Activated CD8-positive, alpha-beta memory T cell treated with anti-CD3 and anti-CD28 coated beads, Interleukin-2, amount 10 ng/mL, durations not matched to agents 7 days and 5 days (primary cell): ENCODE measurements at regions of chr19 and their contacts with region 1.

Region 1: DNA sequence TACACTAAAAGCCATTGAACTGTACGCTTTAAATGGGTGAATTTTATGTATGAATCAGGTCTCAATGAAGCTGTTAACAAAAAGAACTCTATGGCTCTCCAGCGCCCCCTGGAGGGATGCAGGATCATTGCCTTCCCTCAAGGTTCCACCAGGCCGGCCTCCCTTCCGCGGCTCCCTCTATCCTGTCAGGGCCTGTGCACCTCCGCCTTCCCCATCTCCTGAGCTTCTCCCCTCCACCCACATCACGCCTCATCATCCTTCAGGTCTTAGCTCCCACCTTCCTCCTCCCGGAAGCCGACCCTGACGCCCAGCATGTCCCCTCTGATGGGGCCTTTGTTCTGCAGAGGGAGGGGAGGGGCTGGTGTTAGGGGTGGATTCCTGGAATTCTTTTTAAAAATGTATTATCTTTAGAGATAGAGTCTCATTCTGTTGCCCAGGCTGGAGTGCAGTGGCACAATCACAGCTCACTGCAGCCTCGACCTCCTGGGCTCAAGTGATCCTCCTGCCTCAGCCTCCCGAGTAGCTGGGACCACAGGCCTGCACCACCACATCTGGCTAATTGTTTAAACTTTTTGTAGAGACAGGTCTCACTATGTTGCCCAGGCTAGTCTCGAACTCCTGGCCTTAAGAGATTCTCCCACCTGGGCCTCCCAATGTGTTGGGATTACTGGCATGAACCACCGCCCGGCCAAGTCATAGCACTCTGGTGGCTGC is 27.7 kb downstream of the MEIS3 start:
- DNase-seq: peak; percentile 87
- ATAC-seq: peak; percentile 87
- H3K4me3 Mint-ChIP-seq: no peak overlapping the region
- H3K27ac Mint-ChIP-seq: no peak overlapping the region
- H3K4me1 Mint-ChIP-seq: peaks cover 4% of the 10 kb centered on the region
- H3K27me3 Mint-ChIP-seq: peaks cover 4% of the 10 kb centered on the region

Region 2: DNA sequence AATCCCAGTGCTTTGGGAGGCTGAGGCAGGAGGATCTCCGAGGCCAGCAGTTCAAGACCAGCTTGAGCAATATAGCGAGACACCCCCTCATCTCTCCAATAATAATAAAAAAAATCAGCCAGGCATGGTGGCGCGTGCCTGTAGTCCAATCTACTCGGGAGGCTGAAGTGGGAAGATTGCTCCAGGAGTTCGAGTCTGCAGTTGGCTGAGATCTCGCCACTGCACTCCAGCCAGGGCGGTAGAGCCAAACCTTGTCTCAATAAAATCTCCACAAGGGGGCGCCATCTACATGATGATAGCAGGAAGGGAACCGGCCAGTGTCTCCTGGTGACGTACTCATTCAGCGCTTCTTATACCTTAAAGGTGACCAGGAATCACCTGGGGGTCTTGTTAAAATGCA is 95.6 kb before region 1 on chr19:
- CTCF ChIA-PET with region 1: interaction called, 88 read pairs
- DNase-seq: peak; percentile 86
- ATAC-seq: peak; percentile 96
- H3K4me3 Mint-ChIP-seq: no peak overlapping the region
- H3K27ac Mint-ChIP-seq: no peak overlapping the region
- H3K4me1 Mint-ChIP-seq: peaks cover 14% of the 10 kb centered on the region
- H3K27me3 Mint-ChIP-seq: no peaks in the 10 kb centered on the region

Region 3: DNA sequence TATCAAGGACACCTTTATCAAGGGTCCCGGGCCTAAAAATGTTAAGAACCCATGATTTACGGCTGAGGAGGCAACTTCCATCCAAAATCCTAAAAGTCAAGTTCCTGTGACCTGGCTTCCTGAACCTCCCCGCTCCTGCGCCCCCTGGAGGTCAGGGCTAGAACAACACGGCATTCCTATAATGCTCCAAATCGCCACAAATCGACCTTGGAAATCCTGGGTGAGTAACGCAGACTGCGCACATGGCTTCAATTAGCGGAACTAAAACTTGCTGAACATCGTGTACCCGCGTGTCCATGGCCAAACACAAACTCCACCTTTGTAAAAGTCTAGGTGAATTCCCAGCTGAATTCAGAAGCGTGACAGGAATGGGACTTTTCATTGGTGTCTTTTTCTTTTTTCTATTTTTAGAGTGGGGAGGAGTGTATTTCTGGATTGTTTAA is 86.3 kb before region 1 on chr19:
- CTCF ChIA-PET with region 1: interaction called, 88 read pairs
- DNase-seq: peak; percentile 47
- ATAC-seq: no peak
- H3K4me3 Mint-ChIP-seq: no peak overlapping the region
- H3K27ac Mint-ChIP-seq: no peak overlapping the region
- H3K4me1 Mint-ChIP-seq: peaks cover 8% of the 10 kb centered on the region
- H3K27me3 Mint-ChIP-seq: peaks cover 15% of the 10 kb centered on the region

Region 4: DNA sequence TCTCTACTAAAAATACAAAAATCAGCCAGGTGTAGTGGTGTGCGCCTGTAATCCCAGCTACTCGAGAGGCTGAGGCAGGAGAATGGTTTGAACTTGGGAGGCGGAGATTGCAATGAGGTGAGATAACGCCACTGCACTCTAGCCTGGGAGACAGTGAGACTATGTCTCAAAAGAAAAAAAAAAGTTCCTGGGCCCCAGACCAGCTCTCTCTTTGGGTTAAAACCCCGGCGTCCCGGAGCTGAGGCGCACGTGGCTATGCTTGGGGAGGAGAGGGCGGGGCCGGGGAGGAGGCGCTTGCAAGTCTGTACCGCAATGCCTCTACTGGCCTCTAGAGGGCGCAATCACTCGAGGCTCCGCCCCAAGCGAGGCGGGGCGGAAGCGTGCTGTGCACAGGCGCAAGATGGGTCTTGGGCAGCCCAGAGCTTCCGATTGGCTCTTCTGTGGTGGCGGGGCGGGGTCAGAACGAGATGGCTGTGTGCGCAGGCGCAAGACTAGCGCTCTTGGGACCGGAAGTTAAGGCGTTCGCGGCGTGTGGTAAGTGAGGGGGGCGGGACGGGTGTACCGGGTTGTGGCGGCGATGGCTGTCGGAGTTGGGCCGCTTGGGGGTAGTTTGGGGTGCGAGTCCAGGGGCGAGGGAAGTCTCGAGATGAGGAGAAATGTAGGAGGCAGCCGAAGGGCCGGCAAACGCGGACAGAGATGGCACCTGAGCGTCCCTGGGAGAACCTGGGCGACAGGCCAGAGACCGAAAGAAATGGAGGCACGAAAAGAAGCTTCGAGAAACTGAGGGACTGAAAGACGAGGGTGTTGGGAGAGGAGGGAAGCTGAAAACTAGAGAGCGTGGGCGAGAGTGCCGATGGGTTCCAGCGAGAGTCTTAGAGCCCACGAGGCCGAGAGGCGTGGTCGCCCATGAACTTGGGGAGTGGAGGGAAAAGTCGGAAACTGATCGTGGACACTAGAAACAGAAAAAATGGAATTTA is 42.6 kb before region 1 on chr19 and contains the start of gene DHX34:
- CTCF ChIA-PET with region 1: interaction called, 28 read pairs
- DNase-seq: peak; percentile 99
- ATAC-seq: peak; percentile 99
- H3K4me3 Mint-ChIP-seq: peak within 1 kb of the TSS; percentile 94
- H3K27ac Mint-ChIP-seq: peak within 1 kb of the TSS; percentile 90
- H3K4me1 Mint-ChIP-seq: peaks cover 33% of the 10 kb centered on the region
- H3K27me3 Mint-ChIP-seq: no peaks in the 10 kb centered on the region
- total RNA-seq, gene DHX34: 11.7 to 14.3 TPM

Region 5: GRCh38 chr19:47374876-47375693 is 16.6 kb before region 1 on chr19:
- CTCF ChIA-PET with region 1: interaction called, 11 read pairs
- DNase-seq: no peak
- ATAC-seq: no peak
- H3K4me3 Mint-ChIP-seq: no peak overlapping the region
- H3K27ac Mint-ChIP-seq: no peak overlapping the region
- H3K4me1 Mint-ChIP-seq: no peaks in the 10 kb centered on the region
- H3K27me3 Mint-ChIP-seq: no peaks in the 10 kb centered on the region

Region 6: GRCh38 chr19:47414469-47414868 is 22.8 kb after region 1 on chr19:
- CTCF ChIA-PET with region 1: interaction called, 12 read pairs
- DNase-seq: no peak
- ATAC-seq: no peak
- H3K4me3 Mint-ChIP-seq: no peak overlapping the region
- H3K27ac Mint-ChIP-seq: no peak overlapping the region
- H3K4me1 Mint-ChIP-seq: peaks cover 4% of the 10 kb centered on the region
- H3K27me3 Mint-ChIP-seq: peaks cover 42% of the 10 kb centered on the region